ENCODE measurements at regions of chr4 and their contacts with region 1.

Region 1: GRCh38 chr4:123396307-123397143 is at the start of gene SPRY1:
- DNase-seq: peak; percentile 77
- H3K4me3 Mint-ChIP-seq: peak within 1 kb of the TSS; percentile 96
- H3K27ac Mint-ChIP-seq: peak within 1 kb of the TSS; percentile 96
- H3K4me1 Mint-ChIP-seq: peaks cover 42% of the 10 kb centered on the region
- H3K27me3 Mint-ChIP-seq: peaks cover 14% of the 10 kb centered on the region
- total RNA-seq, gene SPRY1: 47.6 and 49.0 TPM in 2 replicates

Region 2: DNA sequence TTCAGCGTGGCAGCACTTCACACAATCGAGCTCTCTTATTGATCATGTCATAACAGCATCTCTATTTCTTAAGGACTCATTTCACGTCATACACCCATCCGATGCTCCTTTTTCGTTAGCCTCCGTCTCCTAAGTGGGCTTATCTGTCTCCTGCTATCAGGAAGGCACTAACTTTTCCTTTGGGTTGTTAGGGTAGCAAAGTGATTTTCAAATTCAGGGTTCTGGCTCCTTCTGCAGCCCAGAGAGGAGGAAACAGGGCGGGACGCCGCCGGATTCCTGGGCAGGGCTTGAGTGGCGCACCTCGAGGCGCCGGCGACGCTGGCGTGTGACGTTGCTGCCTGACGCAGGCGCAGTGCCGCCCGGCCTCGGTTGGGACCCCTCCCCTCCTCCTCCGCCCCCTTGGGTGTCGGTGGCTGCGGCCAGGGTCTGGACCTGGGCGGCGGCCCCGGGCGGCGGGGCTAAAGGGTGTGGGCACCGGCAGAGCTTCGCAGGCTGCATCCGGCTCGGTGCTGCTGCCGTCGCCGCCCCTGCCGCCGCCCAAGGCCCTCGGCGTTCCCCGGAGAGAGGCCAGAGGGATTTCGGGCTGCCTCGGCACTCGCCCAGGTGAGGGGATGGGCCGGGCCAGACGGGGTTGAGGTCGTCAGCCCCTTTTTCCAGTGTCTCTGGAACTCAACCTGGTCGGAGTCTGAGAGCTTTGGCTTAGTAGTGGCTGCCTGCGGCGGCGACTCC is 1244.4 kb before region 1 on chr4 and contains the start of gene BLTP1:
- intact Hi-C with region 1: loop called (anchors 2 kb)
- DNase-seq: peak; percentile 89
- H3K4me3 Mint-ChIP-seq: peak within 1 kb of the TSS; percentile 97
- H3K27ac Mint-ChIP-seq: peak within 1 kb of the TSS; percentile 98
- H3K4me1 Mint-ChIP-seq: peaks cover 61% of the 10 kb centered on the region
- H3K27me3 Mint-ChIP-seq: no peaks in the 10 kb centered on the region
- total RNA-seq, gene BLTP1: 25.4 and 30.8 TPM in 2 replicates

Region 3: GRCh38 chr4:122764821-122765215 is 631.7 kb before region 1 on chr4:
- intact Hi-C with region 1: loop called (anchors 10 kb)
- DNase-seq: no peak
- H3K4me3 Mint-ChIP-seq: peak overlapping the region; percentile 43
- H3K27ac Mint-ChIP-seq: peak overlapping the region; percentile 79
- H3K4me1 Mint-ChIP-seq: peaks cover 45% of the 10 kb centered on the region
- H3K27me3 Mint-ChIP-seq: no peaks in the 10 kb centered on the region

Region 4: DNA sequence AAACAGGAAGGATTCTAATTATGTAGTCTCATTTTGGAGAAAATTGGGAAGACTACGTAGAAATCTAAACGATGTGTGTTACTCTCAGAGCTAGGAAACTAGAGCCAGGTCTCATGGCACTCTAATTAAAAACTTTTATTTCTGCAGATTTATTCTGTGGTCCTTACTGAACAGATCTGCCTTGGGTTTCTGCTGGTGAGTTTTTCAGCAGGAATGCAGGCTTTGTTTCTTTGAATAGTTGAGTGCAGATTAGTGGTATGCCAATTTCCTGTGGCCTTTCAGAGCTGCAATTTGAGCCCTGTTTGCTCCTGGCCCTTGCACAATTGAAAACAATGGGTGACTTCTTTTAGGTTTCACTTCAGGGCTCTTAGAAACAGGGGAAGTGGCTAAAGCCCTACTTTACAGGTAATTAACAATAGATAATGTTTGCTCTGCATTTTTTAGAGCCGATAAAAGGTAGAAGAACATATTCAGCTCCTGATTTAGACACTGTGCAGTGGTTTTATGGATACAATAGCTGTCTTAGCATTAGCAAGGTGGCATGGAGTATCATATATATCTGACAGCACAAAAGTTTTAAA is 21.9 kb after region 1 on chr4:
- intact Hi-C with region 1: loop called (anchors 1 kb)
- DNase-seq: no peak
- H3K4me3 Mint-ChIP-seq: peak overlapping the region; percentile 25
- H3K27ac Mint-ChIP-seq: peak overlapping the region; percentile 64
- H3K4me1 Mint-ChIP-seq: peaks cover 82% of the 10 kb centered on the region
- H3K27me3 Mint-ChIP-seq: no peaks in the 10 kb centered on the region

Region 5: GRCh38 chr4:123488916-123489315 is 92.4 kb after region 1 on chr4:
- intact Hi-C with region 1: loop called (anchors 1 kb)
- DNase-seq: no peak
- H3K4me3 Mint-ChIP-seq: peak overlapping the region; percentile 32
- H3K27ac Mint-ChIP-seq: peak overlapping the region; percentile 72
- H3K4me1 Mint-ChIP-seq: peaks cover 9% of the 10 kb centered on the region
- H3K27me3 Mint-ChIP-seq: peaks cover 2% of the 10 kb centered on the region

Region 6: GRCh38 chr4:123599920-123600810 is 203.6 kb after region 1 on chr4:
- intact Hi-C with region 1: loop called (anchors 5 kb)
- DNase-seq: peak; percentile 41
- H3K4me3 Mint-ChIP-seq: peak overlapping the region; percentile 25
- H3K27ac Mint-ChIP-seq: peak overlapping the region; percentile 75
- H3K4me1 Mint-ChIP-seq: peaks cover 50% of the 10 kb centered on the region
- H3K27me3 Mint-ChIP-seq: no peaks in the 10 kb centered on the region

Region 7: DNA sequence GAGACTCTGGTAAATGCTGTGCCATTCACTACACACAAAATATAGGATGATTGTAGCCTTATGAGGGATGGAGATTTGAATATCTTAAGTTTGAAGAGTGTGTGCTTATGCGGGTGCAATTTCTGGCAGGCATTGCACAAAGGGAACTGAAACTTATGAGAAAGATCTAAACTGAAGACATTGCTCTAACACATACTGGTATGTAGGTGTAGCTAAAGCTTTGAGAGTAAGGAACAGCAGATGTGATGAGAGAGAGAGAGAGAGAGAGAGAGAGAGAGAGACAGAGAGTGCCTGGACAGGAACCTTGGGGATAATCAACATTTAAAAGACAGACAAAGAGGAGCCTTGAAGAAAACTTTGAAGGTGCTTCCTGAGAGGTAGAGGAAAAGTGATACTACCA is 379.7 kb after region 1 on chr4:
- intact Hi-C with region 1: loop called (anchors 10 kb)
- DNase-seq: no peak
- H3K4me3 Mint-ChIP-seq: no peak overlapping the region
- H3K27ac Mint-ChIP-seq: no peak overlapping the region
- H3K4me1 Mint-ChIP-seq: no peaks in the 10 kb centered on the region
- H3K27me3 Mint-ChIP-seq: peaks cover 2% of the 10 kb centered on the region

Region 8: GRCh38 chr4:124650614-124651013 is 1254.1 kb after region 1 on chr4:
- intact Hi-C with region 1: no loop called
- DNase-seq: no peak
- H3K4me3 Mint-ChIP-seq: no peak overlapping the region
- H3K27ac Mint-ChIP-seq: no peak overlapping the region
- H3K4me1 Mint-ChIP-seq: no peaks in the 10 kb centered on the region
- H3K27me3 Mint-ChIP-seq: no peaks in the 10 kb centered on the region